ENCODE measurements at regions of chr5 and their contacts with region 1.

Region 1: GRCh38 chr5:53430261-53431252 is 49.9 kb upstream of the FST start:
- DNase-seq: no peak
- H3K4me3 ChIP-seq: no peak overlapping the region
- H3K27ac ChIP-seq: no peak overlapping the region
- H3K4me1 ChIP-seq: no peaks in the 10 kb centered on the region
- H3K27me3 ChIP-seq: no peaks in the 10 kb centered on the region
- CTCF ChIP-seq: peak in 3 of 6 experiments; percentile 22 to 42 (median 39)
- POLR2A ChIP-seq: no peak

Region 2: GRCh38 chr5:53170748-53171349 is 259.7 kb before region 1 on chr5:
- intact Hi-C with region 1: loop called (anchors 10 kb)
- DNase-seq: peak in 1 of 2 donors; percentile 13
- H3K4me3 ChIP-seq: no peak overlapping the region
- H3K27ac ChIP-seq: no peak overlapping the region
- H3K4me1 ChIP-seq: peaks cover 0 to 5% of the 10 kb centered on the region in 2 donors
- H3K27me3 ChIP-seq: no peaks in the 10 kb centered on the region
- CTCF ChIP-seq: peak in 3 of 6 experiments; percentile 56 to 58 (median 57)
- POLR2A ChIP-seq: no peak

Region 3: DNA sequence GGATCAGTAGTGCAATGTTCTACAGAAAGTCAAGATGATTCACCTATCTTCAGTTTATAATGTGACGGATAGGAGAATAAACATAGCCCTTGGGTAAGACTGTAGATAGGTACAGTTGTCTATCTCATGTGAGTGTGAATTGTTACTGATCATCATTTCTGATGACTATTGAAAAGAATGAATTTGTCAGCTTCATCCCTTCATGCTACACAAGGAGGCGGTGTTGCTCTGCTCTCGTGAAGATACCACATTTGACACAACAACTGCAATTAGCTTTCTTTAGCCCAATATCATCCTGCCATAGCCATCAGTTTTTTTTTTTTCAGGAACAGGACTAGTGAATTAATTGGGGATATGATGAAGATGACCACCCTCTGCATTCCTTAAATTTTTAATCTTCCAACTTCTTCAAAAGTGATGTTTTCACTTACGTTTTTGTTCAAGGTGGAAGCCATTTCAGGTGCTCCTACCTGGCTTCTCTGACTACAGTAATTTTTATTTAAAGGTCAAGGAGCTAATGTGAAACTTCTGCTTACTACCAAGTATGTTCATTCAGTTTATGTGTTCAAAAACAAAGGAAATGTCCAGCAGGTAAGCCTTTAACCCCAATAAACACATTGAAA is 168.1 kb before region 1 on chr5:
- intact Hi-C with region 1: no loop called
- DNase-seq: peak; percentile 2 to 9
- H3K4me3 ChIP-seq: no peak overlapping the region
- H3K27ac ChIP-seq: no peak overlapping the region
- H3K4me1 ChIP-seq: no peaks in the 10 kb centered on the region
- H3K27me3 ChIP-seq: no peaks in the 10 kb centered on the region
- CTCF ChIP-seq: peak in 4 of 6 experiments; percentile 35 to 53 (median 38)
- POLR2A ChIP-seq: no peak

Region 4: DNA sequence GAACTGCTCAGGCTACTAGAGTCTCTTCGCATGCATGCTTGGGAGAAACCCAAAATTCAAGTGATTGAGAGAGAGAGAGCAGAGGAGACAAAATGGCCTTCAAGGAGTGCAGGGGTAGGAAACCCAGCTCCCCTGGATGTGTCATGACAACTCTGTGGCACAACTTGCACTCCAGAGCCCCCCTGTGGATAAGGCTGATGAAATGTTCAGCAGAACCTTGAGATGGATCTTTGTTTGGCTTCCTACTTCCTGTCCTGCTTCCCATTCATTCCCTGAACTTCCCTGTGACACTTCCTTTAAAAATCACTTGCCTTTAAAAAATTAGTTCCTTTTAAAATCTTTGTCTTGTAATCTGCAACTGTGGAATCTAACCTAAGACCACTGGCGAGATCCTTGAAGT is 79.2 kb before region 1 on chr5:
- intact Hi-C with region 1: no loop called
- DNase-seq: no peak
- H3K4me3 ChIP-seq: no peak overlapping the region
- H3K27ac ChIP-seq: no peak overlapping the region
- H3K4me1 ChIP-seq: no peaks in the 10 kb centered on the region
- H3K27me3 ChIP-seq: no peaks in the 10 kb centered on the region
- CTCF ChIP-seq: no peak
- POLR2A ChIP-seq: no peak

Measured in thyroid gland (tissue), 4 donors.